ENCODE measurements at regions of chr5 and their contacts with region 1.

Region 1: GRCh38 chr5:73861313-73861988 is 235.5 kb downstream of the ARHGEF28 start:
- DNase-seq: no peak
- H3K4me3 ChIP-seq: no peak overlapping the region
- H3K27ac ChIP-seq: peak overlapping the region; percentile 21
- H3K4me1 ChIP-seq: peaks cover 16% of the 10 kb centered on the region
- H3K27me3 ChIP-seq: no peaks in the 10 kb centered on the region
- CTCF ChIP-seq: no peak
- POLR2A ChIP-seq: no peak

Region 2: DNA sequence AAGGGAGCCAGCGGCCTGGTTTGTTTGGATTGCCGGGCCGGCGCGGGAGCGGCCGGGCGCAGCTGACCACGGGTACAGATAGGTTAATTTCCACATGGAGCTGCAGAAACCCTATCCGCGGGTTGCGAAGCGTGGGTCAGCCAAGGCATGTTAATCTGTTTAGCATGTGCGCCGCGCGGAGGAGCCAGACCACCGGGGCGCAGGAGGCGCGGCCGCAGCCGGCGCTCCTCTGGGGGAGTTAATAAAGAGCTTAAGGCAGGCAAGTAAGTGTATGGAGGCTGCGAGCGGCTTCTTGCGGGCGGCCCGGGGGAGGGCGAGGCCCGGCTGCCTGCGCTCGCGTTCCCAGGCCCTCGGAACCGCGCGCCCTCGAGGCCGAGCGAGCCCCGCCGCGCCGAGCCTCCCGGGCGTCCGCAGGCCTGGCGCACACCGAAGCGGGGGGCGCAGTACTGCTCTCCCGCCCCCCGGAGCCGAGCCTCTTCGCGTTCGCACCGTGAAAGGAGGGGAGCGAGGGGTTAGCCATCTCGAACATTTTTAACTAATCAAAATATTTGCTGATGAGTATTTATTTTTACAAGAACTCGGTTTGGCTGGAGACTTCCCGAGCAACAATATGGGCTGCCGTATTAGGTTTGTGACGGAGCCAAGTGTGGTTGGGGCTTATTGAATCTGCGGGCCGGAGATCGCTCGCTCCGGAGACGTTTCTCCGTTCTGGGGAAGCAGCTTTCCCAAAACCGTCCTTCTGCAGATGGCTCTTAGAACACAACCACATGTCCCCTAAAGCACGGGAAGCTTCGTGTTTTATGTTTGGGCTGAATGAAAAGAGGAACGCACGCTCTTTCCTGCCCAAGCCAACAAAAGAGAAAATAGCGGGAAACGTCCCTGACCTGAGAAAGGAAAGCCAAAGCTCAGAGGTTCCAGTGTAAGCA is 441.7 kb before region 1 on chr5:
- intact Hi-C with region 1: loop called (anchors 5 kb)
- DNase-seq: no peak
- H3K4me3 ChIP-seq: peak overlapping the region; percentile 11 to 25
- H3K27ac ChIP-seq: no peak overlapping the region
- H3K4me1 ChIP-seq: peaks cover 14% of the 10 kb centered on the region
- H3K27me3 ChIP-seq: no peaks in the 10 kb centered on the region
- CTCF ChIP-seq: no peak
- POLR2A ChIP-seq: no peak